Heart right ventricle (tissue), 16 donors: ENCODE measurements at regions of chr19 and their contacts with region 1.

Region 1: GRCh38 chr19:55146078-55146704 is 2.8 kb downstream of the TNNT1 start:
- DNase-seq: no peak
- ATAC-seq: peak in 3 of 8 donors; percentile 2 to 7 (median 2)
- H3K4me3 ChIP-seq: peak overlapping the region in 1 of 10 donors; percentile 26
- H3K27ac ChIP-seq: peak overlapping the region in 2 of 10 donors; percentile 28 to 31
- H3K4me1 ChIP-seq: peaks cover 0 to 41% (median 8%) of the 10 kb centered on the region in 9 donors
- H3K27me3 ChIP-seq: peaks cover 0 to 81% (median 72%) of the 10 kb centered on the region in 7 donors
- CTCF ChIP-seq: peak in 7 of 9 donors; percentile 26 to 51 (median 41)

Region 2: GRCh38 chr19:54817670-54818536 is 328.3 kb before region 1 on chr19:
- intact Hi-C with region 1: no loop called
- DNase-seq: no peak
- ATAC-seq: no peak
- H3K4me3 ChIP-seq: no peak overlapping the region
- H3K27ac ChIP-seq: no peak overlapping the region
- H3K4me1 ChIP-seq: no peaks in the 10 kb centered on the region
- H3K27me3 ChIP-seq: peaks cover 0 to 4% (median 0%) of the 10 kb centered on the region in 7 donors
- CTCF ChIP-seq: no peak

Region 3: GRCh38 chr19:55418185-55418584 is 272.0 kb after region 1 on chr19:
- intact Hi-C with region 1: loop called in 8 of 10 experiments (anchors 1 to 5 kb)
- DNase-seq: peak in 1 of 2 donors; percentile 64
- ATAC-seq: peak; percentile 75 to 92 (median 86)
- H3K4me3 ChIP-seq: no peak overlapping the region
- H3K27ac ChIP-seq: no peak overlapping the region
- H3K4me1 ChIP-seq: no peaks in the 10 kb centered on the region
- H3K27me3 ChIP-seq: peaks cover 0 to 17% (median 7%) of the 10 kb centered on the region in 7 donors
- CTCF ChIP-seq: peak; percentile 39 to 76 (median 70)

Region 4: DNA sequence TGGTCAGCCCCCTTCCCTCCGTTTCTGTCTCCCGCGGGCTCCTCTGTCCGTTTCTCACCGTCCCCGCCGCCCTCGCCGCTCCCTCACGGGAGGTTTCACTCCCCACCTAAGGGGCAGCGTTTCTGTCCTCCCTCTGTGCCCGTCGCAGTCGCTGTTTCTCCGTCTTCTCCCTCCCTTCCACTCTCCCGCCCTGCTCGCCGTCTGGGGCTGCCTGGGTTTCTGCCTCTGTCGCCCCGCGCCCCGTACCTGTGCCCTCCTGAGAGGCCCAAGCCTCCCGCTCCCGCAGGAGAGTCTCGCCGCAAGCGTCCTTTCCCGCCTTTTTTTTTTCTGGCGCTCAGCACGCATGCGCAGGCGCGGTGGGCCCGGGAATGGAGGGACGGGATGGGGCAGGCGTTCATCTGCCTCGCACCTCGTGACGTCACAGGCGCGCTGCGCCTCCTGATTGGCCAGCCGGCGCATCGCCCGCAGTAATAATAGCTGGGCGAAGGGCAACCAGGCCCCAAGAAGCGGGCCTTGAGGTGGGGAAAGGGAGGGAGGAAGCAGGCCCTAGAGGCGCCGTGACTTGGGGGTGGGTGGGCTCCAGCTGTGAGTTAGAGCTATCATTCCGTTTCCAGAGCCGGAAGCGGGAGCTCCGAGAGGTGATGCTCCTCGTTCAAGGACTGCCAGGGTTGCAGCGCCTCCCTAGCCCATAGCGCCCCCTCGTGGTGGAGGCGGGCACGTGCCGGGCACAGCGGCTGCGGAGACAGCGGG is 357.5 kb after region 1 on chr19:
- intact Hi-C with region 1: loop called in 6 of 10 experiments (anchors 2 to 10 kb)
- DNase-seq: peak; percentile 92 to 96
- ATAC-seq: peak; percentile 96 to 99 (median 98)
- H3K4me3 ChIP-seq: peak overlapping the region in 9 of 10 donors; percentile 14 to 62 (median 53)
- H3K27ac ChIP-seq: peak overlapping the region in 9 of 10 donors; percentile 42 to 86 (median 57)
- H3K4me1 ChIP-seq: peaks cover 0 to 14% (median 3%) of the 10 kb centered on the region in 9 donors
- H3K27me3 ChIP-seq: no peaks in the 10 kb centered on the region
- CTCF ChIP-seq: peak; percentile 98 to 100 (median 99)

Region 5: GRCh38 chr19:55632463-55632834 is 486.3 kb after region 1 on chr19:
- intact Hi-C with region 1: loop called in 1 of 10 experiments (anchors 10 kb)
- DNase-seq: peak in 1 of 2 donors; percentile 92
- ATAC-seq: peak; percentile 27 to 73 (median 49)
- H3K4me3 ChIP-seq: no peak overlapping the region
- H3K27ac ChIP-seq: peak overlapping the region in 1 of 10 donors; percentile 31
- H3K4me1 ChIP-seq: peaks cover 7 to 37% (median 26%) of the 10 kb centered on the region in 9 donors
- H3K27me3 ChIP-seq: no peaks in the 10 kb centered on the region
- CTCF ChIP-seq: peak; percentile 82 to 94 (median 86)